Endothelial cell of umbilical vein (primary cell): ENCODE measurements at regions of chr3 and their contacts with region 1.

Region 1: GRCh38 chr3:65439641-65440284 is 599.0 kb downstream of the MAGI1 start:
- DNase-seq: peak; percentile 59
- H3K4me3 ChIP-seq: no peak overlapping the region
- H3K27ac ChIP-seq: no peak overlapping the region
- H3K4me1 ChIP-seq: no peaks in the 10 kb centered on the region
- H3K27me3 ChIP-seq: no peaks in the 10 kb centered on the region
- CTCF ChIP-seq: peak; percentile 35 to 66
- POLR2A ChIP-seq: no peak

Region 2: DNA sequence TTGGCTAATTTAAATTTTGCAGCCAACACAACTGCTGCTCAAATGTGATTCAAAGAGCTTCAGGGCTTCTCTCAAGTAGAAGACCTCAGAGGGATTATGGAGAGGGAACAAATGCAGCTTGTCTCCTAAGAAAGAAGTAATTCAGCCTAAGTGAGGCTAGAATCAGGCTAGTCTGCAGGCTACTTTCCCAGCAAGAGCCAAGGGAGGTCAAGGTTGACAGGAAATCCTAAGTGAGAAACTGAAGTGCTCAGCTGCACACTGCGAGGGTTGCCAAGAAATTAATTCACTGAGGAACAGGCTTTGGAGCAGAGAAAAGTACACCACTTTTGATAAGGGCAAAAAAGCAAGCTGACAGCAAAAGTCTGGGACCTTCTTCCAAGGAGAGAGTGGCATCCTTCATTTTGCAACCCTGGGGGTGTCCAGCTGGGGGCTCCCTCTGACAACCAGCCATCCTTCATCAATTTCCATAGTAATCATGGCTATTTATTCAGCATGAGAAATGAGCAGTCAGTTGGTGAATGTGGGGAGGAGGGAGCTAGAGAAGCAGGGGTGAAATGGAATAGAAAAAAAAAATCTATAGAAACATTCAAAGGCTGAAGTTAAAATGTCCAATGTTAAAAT is 105.6 kb before region 1 on chr3:
- CTCF ChIA-PET with region 1: interaction called, 3 read pairs
- POLR2A ChIA-PET with region 1: no interaction called
- dilution Hi-C with region 1: no loop called
- intact Hi-C with region 1: loop called (anchors 2 kb)
- DNase-seq: peak; percentile 63
- H3K4me3 ChIP-seq: no peak overlapping the region
- H3K27ac ChIP-seq: no peak overlapping the region
- H3K4me1 ChIP-seq: no peaks in the 10 kb centered on the region
- H3K27me3 ChIP-seq: peaks cover 0 to 11% of the 10 kb centered on the region in 2 experiments
- CTCF ChIP-seq: peak; percentile 23 to 26
- POLR2A ChIP-seq: no peak

Region 3: GRCh38 chr3:65342084-65342683 is 97.6 kb before region 1 on chr3:
- CTCF ChIA-PET with region 1: interaction called, 7 read pairs
- POLR2A ChIA-PET with region 1: no interaction called
- dilution Hi-C with region 1: no loop called
- intact Hi-C with region 1: loop called (anchors 1 kb)
- DNase-seq: peak; percentile 60
- H3K4me3 ChIP-seq: no peak overlapping the region
- H3K27ac ChIP-seq: no peak overlapping the region
- H3K4me1 ChIP-seq: no peaks in the 10 kb centered on the region
- H3K27me3 ChIP-seq: peaks cover 0 to 2% of the 10 kb centered on the region in 2 experiments
- CTCF ChIP-seq: peak; percentile 83 to 90
- POLR2A ChIP-seq: no peak

Region 4: DNA sequence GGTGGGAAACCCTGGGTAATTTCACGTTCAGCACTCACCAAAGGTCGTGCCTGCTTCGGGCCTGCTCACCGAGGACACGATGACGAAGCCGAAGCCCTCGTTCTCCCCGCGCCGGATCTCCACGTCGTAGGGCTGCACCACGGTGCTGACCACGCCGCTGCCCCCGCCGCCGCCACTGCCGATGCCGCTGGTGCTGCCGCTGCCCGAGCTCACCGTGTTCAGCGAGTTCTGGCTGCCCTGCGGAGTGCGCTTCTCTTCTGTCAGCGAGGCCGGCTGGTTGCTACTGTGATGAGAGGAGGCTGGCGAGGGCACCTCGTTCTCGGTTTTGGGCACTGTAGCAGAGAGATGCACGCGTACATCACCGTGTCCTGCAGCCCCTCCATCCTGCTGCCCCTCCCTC is 60.5 kb before region 1 on chr3:
- CTCF ChIA-PET with region 1: no interaction called
- POLR2A ChIA-PET with region 1: no interaction called
- dilution Hi-C with region 1: no loop called
- intact Hi-C with region 1: no loop called
- DNase-seq: no peak
- H3K4me3 ChIP-seq: no peak overlapping the region
- H3K27ac ChIP-seq: no peak overlapping the region
- H3K4me1 ChIP-seq: no peaks in the 10 kb centered on the region
- H3K27me3 ChIP-seq: no peaks in the 10 kb centered on the region
- CTCF ChIP-seq: no peak
- POLR2A ChIP-seq: no peak

Region 5: GRCh38 chr3:65548848-65549625 is 109.3 kb after region 1 on chr3:
- CTCF ChIA-PET with region 1: no interaction called
- POLR2A ChIA-PET with region 1: no interaction called
- dilution Hi-C with region 1: no loop called
- intact Hi-C with region 1: no loop called
- DNase-seq: no peak
- H3K4me3 ChIP-seq: peak overlapping the region in 2 of 3 experiments; percentile 21 to 40
- H3K27ac ChIP-seq: no peak overlapping the region
- H3K4me1 ChIP-seq: peaks cover 2% of the 10 kb centered on the region
- H3K27me3 ChIP-seq: peaks cover 0 to 12% of the 10 kb centered on the region in 2 experiments
- CTCF ChIP-seq: no peak
- POLR2A ChIP-seq: no peak

Region 6: GRCh38 chr3:65672871-65673815 is 233.4 kb after region 1 on chr3:
- CTCF ChIA-PET with region 1: interaction called, 65 read pairs
- POLR2A ChIA-PET with region 1: no interaction called
- dilution Hi-C with region 1: no loop called
- intact Hi-C with region 1: loop called (anchors 1 kb)
- DNase-seq: peak; percentile 50
- H3K4me3 ChIP-seq: no peak overlapping the region
- H3K27ac ChIP-seq: no peak overlapping the region
- H3K4me1 ChIP-seq: no peaks in the 10 kb centered on the region
- H3K27me3 ChIP-seq: no peaks in the 10 kb centered on the region
- CTCF ChIP-seq: peak; percentile 73 to 85
- POLR2A ChIP-seq: no peak

Region 7: GRCh38 chr3:65732051-65732935 is 292.5 kb after region 1 on chr3:
- CTCF ChIA-PET with region 1: interaction called, 25 read pairs
- POLR2A ChIA-PET with region 1: no interaction called
- dilution Hi-C with region 1: no loop called
- intact Hi-C with region 1: loop called (anchors 1 kb)
- DNase-seq: peak; percentile 73
- H3K4me3 ChIP-seq: no peak overlapping the region
- H3K27ac ChIP-seq: no peak overlapping the region
- H3K4me1 ChIP-seq: no peaks in the 10 kb centered on the region
- H3K27me3 ChIP-seq: no peaks in the 10 kb centered on the region
- CTCF ChIP-seq: peak; percentile 71 to 74
- POLR2A ChIP-seq: no peak

Region 8: GRCh38 chr3:65751123-65751700 is 311.4 kb after region 1 on chr3:
- CTCF ChIA-PET with region 1: interaction called, 41 read pairs
- POLR2A ChIA-PET with region 1: no interaction called
- dilution Hi-C with region 1: no loop called
- intact Hi-C with region 1: loop called (anchors 1 kb)
- DNase-seq: peak; percentile 52
- H3K4me3 ChIP-seq: no peak overlapping the region
- H3K27ac ChIP-seq: no peak overlapping the region
- H3K4me1 ChIP-seq: no peaks in the 10 kb centered on the region
- H3K27me3 ChIP-seq: no peaks in the 10 kb centered on the region
- CTCF ChIP-seq: peak; percentile 76 to 79
- POLR2A ChIP-seq: no peak

Region 9: GRCh38 chr3:66195347-66195783 is 755.6 kb after region 1 on chr3:
- CTCF ChIA-PET with region 1: interaction called, 11 read pairs
- POLR2A ChIA-PET with region 1: no interaction called
- dilution Hi-C with region 1: no loop called
- intact Hi-C with region 1: loop called (anchors 1 kb)
- DNase-seq: peak; percentile 59
- H3K4me3 ChIP-seq: peak overlapping the region in 1 of 3 experiments; percentile 9
- H3K27ac ChIP-seq: no peak overlapping the region
- H3K4me1 ChIP-seq: peaks cover 3% of the 10 kb centered on the region
- H3K27me3 ChIP-seq: peaks cover 1 to 8% of the 10 kb centered on the region in 2 experiments
- CTCF ChIP-seq: peak; percentile 10 to 20
- POLR2A ChIP-seq: no peak